ENCODE measurements at regions of chr1 and their contacts with region 1.

Region 1: GRCh38 chr1:159891275-159892157 is 8.4 kb downstream of the CFAP45 start:
- DNase-seq: peak; percentile 81 to 94
- H3K4me3 ChIP-seq: no peak overlapping the region
- CTCF ChIP-seq: peak in 1 of 3 donors; percentile 64
- POLR2A ChIP-seq: no peak

Region 2: GRCh38 chr1:159798893-159799292 is 92.6 kb before region 1 on chr1:
- intact Hi-C with region 1: loop called (anchors 2 kb)
- DNase-seq: peak in 1 of 2 donors; percentile 60
- H3K4me3 ChIP-seq: no peak overlapping the region
- CTCF ChIP-seq: no peak
- POLR2A ChIP-seq: no peak

Region 3: DNA sequence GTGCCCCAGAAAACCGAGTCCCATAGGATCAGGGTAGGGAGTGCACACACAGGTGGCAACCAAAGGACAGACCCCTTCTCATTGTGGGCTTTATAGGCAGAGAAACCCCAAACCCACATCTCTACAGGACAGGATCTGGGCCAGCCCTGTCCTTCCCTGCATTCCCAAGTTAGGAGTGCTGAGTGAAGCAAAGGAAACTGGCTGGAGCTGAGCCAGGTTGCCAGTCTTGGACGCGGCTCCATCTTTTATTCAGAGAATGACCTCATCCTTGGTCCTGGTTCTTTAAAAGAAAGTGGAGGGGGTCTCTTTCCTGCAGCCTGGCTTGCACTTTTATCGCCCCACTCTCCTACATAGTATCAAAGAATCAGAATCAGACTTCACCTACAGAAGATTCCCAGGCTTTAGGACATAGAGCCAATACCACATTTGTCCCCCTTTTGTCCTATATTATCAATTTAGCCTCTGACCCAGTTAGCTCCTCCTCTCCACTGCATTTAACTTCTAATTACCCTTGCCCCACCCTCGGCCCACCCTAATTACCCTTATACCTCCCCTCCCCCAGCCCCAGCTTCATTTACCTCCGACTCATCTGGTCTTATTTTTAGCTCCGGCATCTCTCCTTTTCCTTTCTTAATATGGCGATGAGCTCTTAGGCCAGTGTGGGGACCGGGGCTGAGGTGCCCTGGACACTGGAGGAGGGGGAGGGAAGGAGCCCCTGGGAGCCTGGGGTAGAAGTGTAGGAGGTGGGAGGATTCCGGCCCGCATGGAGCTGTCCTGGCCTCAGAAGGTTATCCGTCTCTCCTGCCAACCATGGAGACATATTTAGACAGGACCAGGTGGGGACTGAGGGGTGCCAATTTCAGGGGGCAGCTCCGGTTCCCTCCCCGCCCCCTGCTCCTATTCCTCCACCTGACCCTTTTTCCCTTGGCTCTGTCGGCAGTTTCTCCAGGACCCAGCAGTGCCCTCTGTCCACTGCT is 298.4 kb after region 1 on chr1 and contains the start of gene CASQ1:
- intact Hi-C with region 1: no loop called
- DNase-seq: no peak
- H3K4me3 ChIP-seq: no peak within 1 kb of the TSS
- CTCF ChIP-seq: no peak
- POLR2A ChIP-seq: no peak
- total RNA-seq, gene CASQ1: 0.12 to 0.23 TPM in 2 of 4 donors, not detected in the others

Measured in lower leg skin (tissue), 4 donors.